T-cell (primary cell): ENCODE measurements at regions of chr1 and their contacts with region 1.

Region 1: DNA sequence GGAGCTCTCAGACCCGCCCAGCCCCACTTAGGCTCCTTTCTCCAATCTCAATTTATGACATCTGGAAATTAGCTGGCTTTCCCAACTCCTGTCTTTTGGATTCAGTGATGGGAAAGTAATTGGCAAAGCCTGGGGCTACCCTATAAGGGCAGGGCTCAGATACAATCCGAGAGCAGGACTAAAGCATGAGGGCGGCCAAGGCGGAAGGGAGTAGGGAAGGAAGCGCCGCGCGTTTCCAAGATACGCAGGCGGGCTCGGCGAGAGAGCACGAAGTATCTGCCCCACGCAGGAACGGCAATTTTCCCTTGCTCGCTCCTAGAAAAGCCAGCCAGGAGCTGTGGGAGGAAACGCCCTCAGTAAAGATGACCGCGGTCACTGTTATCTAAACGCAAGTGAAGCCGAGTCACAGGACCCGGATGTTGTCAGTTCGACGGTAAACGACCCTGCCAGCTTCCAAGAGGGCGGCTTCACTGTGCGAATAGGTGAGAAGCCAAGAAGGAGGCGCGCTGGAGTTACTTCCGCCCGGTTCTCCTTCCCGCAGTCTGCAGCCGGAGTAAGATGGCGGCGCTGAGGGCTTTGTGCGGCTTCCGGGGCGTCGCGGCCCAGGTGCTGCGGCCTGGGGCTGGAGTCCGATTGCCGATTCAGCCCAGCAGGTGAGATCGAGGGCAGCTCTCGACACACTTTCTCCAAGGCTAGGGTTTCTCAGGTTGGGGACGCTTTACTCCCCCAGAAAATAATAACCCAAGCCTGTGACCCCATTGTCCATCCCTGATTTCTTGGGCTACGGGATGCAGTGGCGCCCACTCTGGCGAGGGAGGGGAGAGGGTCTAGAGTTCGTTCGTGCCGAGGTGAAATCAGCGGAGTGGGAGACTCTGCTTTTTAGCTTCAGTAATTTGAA is at the start of gene NDUFS2:
- DNase-seq: peak; percentile 82 to 99 (median 96)
- ATAC-seq: peak; percentile 98
- H3K4me3 ChIP-seq: peak within 1 kb of the TSS; percentile 90 to 91
- H3K4me3 Mint-ChIP-seq: peak within 1 kb of the TSS; percentile 93 to 95 (median 95)
- H3K27ac ChIP-seq: peak within 1 kb of the TSS; percentile 79
- H3K27ac Mint-ChIP-seq: peak within 1 kb of the TSS; percentile 97 to 98
- H3K4me1 ChIP-seq: peaks cover 22 to 49% of the 10 kb centered on the region in 2 experiments
- H3K4me1 Mint-ChIP-seq: peaks cover 64 to 72% (median 72%) of the 10 kb centered on the region in 3 donors
- H3K27me3 ChIP-seq: no peaks in the 10 kb centered on the region
- H3K27me3 Mint-ChIP-seq: no peaks in the 10 kb centered on the region
- total RNA-seq, gene NDUFS2: 57.3 to 92.2 (median 88.2) TPM

Region 2: GRCh38 chr1:161233102-161233501 is 31.0 kb after region 1 on chr1:
- CTCF ChIA-PET with region 1: no interaction called
- POLR2A ChIA-PET with region 1: no interaction called
- DNase-seq: no peak
- ATAC-seq: no peak
- H3K4me3 ChIP-seq: no peak overlapping the region
- H3K4me3 Mint-ChIP-seq: no peak overlapping the region
- H3K27ac ChIP-seq: no peak overlapping the region
- H3K27ac Mint-ChIP-seq: no peak overlapping the region
- H3K4me1 ChIP-seq: peaks cover 0 to 1% of the 10 kb centered on the region in 2 experiments
- H3K4me1 Mint-ChIP-seq: peaks cover 0 to 5% (median 0%) of the 10 kb centered on the region in 3 donors
- H3K27me3 ChIP-seq: peaks cover 2 to 4% of the 10 kb centered on the region in 2 experiments
- H3K27me3 Mint-ChIP-seq: no peaks in the 10 kb centered on the region

Region 3: GRCh38 chr1:161258439-161259344 is 56.6 kb after region 1 on chr1 and contains the start of gene PCP4L1:
- CTCF ChIA-PET with region 1: no interaction called
- POLR2A ChIA-PET with region 1: no interaction called
- DNase-seq: peak in 23 of 35 experiments; percentile 3 to 37 (median 11)
- ATAC-seq: peak; percentile 76 to 96 (median 82)
- H3K4me3 ChIP-seq: peak within 1 kb of the TSS; percentile 30 to 65
- H3K4me3 Mint-ChIP-seq: peak within 1 kb of the TSS; percentile 57 to 80 (median 63)
- H3K27ac ChIP-seq: no peak within 1 kb of the TSS
- H3K27ac Mint-ChIP-seq: peak within 1 kb of the TSS; percentile 39
- H3K4me1 ChIP-seq: peaks cover 3 to 14% of the 10 kb centered on the region in 2 experiments
- H3K4me1 Mint-ChIP-seq: peaks cover 19 to 25% (median 21%) of the 10 kb centered on the region in 3 donors
- H3K27me3 ChIP-seq: peaks cover 14 to 48% of the 10 kb centered on the region in 2 experiments
- H3K27me3 Mint-ChIP-seq: peaks cover 54 to 57% of the 10 kb centered on the region in 2 donors
- total RNA-seq, gene PCP4L1: not detected

Region 4: GRCh38 chr1:161314201-161314981 is 112.3 kb after region 1 on chr1 and contains the start of gene SDHC:
- CTCF ChIA-PET with region 1: interaction called in 1 of 2 experiments, 3 read pairs
- POLR2A ChIA-PET with region 1: interaction called in 1 of 2 experiments, 14 read pairs
- DNase-seq: peak; percentile 78 to 95 (median 90)
- ATAC-seq: peak; percentile 99
- H3K4me3 ChIP-seq: peak within 1 kb of the TSS; percentile 93 to 100
- H3K4me3 Mint-ChIP-seq: peak within 1 kb of the TSS; percentile 94 to 97 (median 96)
- H3K27ac ChIP-seq: peak within 1 kb of the TSS; percentile 96
- H3K27ac Mint-ChIP-seq: peak within 1 kb of the TSS; percentile 99
- H3K4me1 ChIP-seq: peaks cover 11 to 13% of the 10 kb centered on the region in 2 experiments
- H3K4me1 Mint-ChIP-seq: peaks cover 26 to 30% (median 29%) of the 10 kb centered on the region in 3 donors
- H3K27me3 ChIP-seq: no peaks in the 10 kb centered on the region
- H3K27me3 Mint-ChIP-seq: no peaks in the 10 kb centered on the region
- total RNA-seq, gene SDHC: 86.4 to 106 (median 103) TPM

Region 5: GRCh38 chr1:161389691-161390558 is 187.8 kb after region 1 on chr1:
- CTCF ChIA-PET with region 1: interaction called in 1 of 2 experiments, 3 read pairs
- POLR2A ChIA-PET with region 1: interaction called in 1 of 2 experiments, 12 read pairs
- DNase-seq: peak; percentile 84 to 98 (median 93)
- ATAC-seq: peak; percentile 90 to 97 (median 94)
- H3K4me3 ChIP-seq: peak overlapping the region; percentile 84 to 88
- H3K4me3 Mint-ChIP-seq: peak overlapping the region; percentile 86 to 91 (median 89)
- H3K27ac ChIP-seq: peak overlapping the region; percentile 87
- H3K27ac Mint-ChIP-seq: peak overlapping the region; percentile 86 to 93
- H3K4me1 ChIP-seq: peaks cover 12 to 24% of the 10 kb centered on the region in 2 experiments
- H3K4me1 Mint-ChIP-seq: peaks cover 36 to 37% (median 37%) of the 10 kb centered on the region in 3 donors
- H3K27me3 ChIP-seq: no peaks in the 10 kb centered on the region
- H3K27me3 Mint-ChIP-seq: no peaks in the 10 kb centered on the region